Naive thymus-derived CD4-positive, alpha-beta T cell (primary cell): ENCODE measurements at regions of chr7 and their contacts with region 1.

Region 1: GRCh38 chr7:100586266-100587025 is at the start of gene FBXO24:
- DNase-seq: peak; percentile 91 to 100 (median 99)
- ATAC-seq: peak; percentile 91
- H3K4me3 ChIP-seq: peak within 1 kb of the TSS; percentile 94
- H3K4me3 Mint-ChIP-seq: peak within 1 kb of the TSS; percentile 95 to 100 (median 99)
- H3K27ac ChIP-seq: peak within 1 kb of the TSS; percentile 90
- H3K27ac Mint-ChIP-seq: peak within 1 kb of the TSS in 8 of 9 donors; percentile 94 to 99 (median 98)
- H3K4me1 ChIP-seq: peaks cover 22 to 28% of the 10 kb centered on the region in 2 donors
- H3K4me1 Mint-ChIP-seq: peaks cover 20 to 42% (median 30%) of the 10 kb centered on the region in 7 donors
- H3K27me3 ChIP-seq: no peaks in the 10 kb centered on the region
- H3K27me3 Mint-ChIP-seq: peaks cover 0 to 22% (median 4%) of the 10 kb centered on the region in 5 donors
- total RNA-seq, gene FBXO24: 0.75 to 3.1 (median 1.7) TPM

Region 2: DNA sequence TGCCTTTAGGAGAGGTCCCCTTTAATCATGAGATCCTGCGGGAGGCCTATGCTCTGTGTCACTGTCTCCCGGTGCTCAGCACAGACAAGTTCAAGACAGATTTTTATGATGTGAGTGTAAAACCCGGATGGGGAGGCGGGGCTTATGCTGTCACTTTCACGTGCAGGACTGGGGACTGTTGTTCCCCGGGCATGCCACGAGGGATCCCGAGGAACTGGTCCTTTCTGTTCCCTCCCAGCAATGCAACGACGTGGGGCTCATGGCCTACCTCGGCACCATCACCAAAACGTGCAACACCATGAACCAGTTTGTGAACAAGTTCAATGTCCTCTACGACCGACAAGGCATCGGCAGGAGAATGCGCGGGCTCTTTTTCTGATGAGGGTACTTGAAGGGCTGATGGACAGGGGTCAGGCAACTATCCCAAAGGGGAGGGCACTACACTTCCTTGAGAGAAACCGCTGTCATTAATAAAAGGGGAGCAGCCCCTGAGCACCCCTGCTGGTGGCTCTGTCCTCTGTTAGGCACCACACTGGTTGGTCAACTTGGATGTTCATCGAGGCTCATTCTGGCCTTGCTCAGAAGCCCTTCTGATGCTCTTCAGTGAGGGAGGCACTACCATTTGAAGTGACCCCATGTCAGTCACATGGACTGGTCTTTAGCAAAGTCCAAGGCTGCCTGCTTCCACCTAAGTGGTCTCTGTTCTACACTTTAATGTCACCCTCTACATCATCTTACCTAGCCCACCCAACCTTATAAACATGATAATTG is 494.9 kb before region 1 on chr7:
- CTCF ChIA-PET with region 1: no interaction called
- POLR2A ChIA-PET with region 1: no interaction called
- intact Hi-C with region 1: no loop called
- DNase-seq: no peak
- ATAC-seq: no peak
- H3K4me3 ChIP-seq: no peak overlapping the region
- H3K4me3 Mint-ChIP-seq: peak overlapping the region in 5 of 10 donors; percentile 2 to 91 (median 29)
- H3K27ac ChIP-seq: no peak overlapping the region
- H3K27ac Mint-ChIP-seq: peak overlapping the region in 4 of 9 donors; percentile 28 to 49 (median 44)
- H3K4me1 ChIP-seq: peaks cover 6 to 11% of the 10 kb centered on the region in 2 donors
- H3K4me1 Mint-ChIP-seq: peaks cover 11 to 42% (median 23%) of the 10 kb centered on the region in 7 donors
- H3K27me3 ChIP-seq: no peaks in the 10 kb centered on the region
- H3K27me3 Mint-ChIP-seq: no peaks in the 10 kb centered on the region

Region 3: GRCh38 chr7:100469227-100470044 is 117.0 kb before region 1 on chr7:
- CTCF ChIA-PET with region 1: interaction called, 6 read pairs
- POLR2A ChIA-PET with region 1: interaction called, 4 read pairs
- intact Hi-C with region 1: loop called in 1 of 2 experiments (anchors 1 kb)
- DNase-seq: peak; percentile 55 to 87 (median 75)
- ATAC-seq: peak; percentile 94
- H3K4me3 ChIP-seq: no peak overlapping the region
- H3K4me3 Mint-ChIP-seq: peak overlapping the region in 1 of 10 donors; percentile 41
- H3K27ac ChIP-seq: peak overlapping the region; percentile 3
- H3K27ac Mint-ChIP-seq: peak overlapping the region in 6 of 9 donors; percentile 22 to 85 (median 65)
- H3K4me1 ChIP-seq: peaks cover 16 to 23% of the 10 kb centered on the region in 2 donors
- H3K4me1 Mint-ChIP-seq: peaks cover 26 to 45% (median 29%) of the 10 kb centered on the region in 7 donors
- H3K27me3 ChIP-seq: no peaks in the 10 kb centered on the region
- H3K27me3 Mint-ChIP-seq: no peaks in the 10 kb centered on the region

Region 4: DNA sequence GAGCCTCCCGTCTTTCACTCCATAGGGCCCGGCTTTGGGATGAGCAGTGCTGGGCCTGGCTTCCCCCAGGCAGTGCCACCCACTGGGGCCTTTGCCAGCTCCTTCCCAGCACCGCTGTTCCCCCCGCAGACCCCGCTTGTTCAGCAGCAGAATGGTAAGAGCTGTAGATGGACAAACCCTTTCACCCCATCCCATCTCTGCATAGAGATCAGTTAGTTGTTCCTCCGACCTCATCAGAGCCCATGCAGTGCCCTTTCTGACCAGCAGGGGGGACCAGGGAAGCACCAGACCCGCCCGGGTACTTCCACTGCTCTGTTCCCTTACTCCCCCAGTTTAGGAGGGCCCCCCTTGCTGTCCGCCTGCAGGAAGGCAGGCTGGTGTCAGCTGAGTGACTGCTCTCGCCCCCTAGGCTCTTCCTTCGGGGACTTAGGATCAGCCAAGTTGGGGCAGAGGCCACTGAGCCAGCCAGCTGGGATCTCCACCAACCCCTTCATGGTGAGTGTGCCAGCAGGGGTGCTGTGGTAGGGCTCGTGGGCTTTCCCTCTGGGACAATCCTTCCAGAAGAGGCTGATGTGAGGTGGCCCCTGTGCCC is 22.5 kb before region 1 on chr7:
- CTCF ChIA-PET with region 1: interaction called, 65 read pairs
- POLR2A ChIA-PET with region 1: interaction called, 173 read pairs
- intact Hi-C with region 1: loop called (anchors 1 kb)
- DNase-seq: peak; percentile 65 to 89 (median 77)
- ATAC-seq: peak; percentile 82
- H3K4me3 ChIP-seq: no peak overlapping the region
- H3K4me3 Mint-ChIP-seq: no peak overlapping the region
- H3K27ac ChIP-seq: no peak overlapping the region
- H3K27ac Mint-ChIP-seq: peak overlapping the region in 6 of 9 donors; percentile 9 to 76 (median 48)
- H3K4me1 ChIP-seq: peaks cover 8 to 22% of the 10 kb centered on the region in 2 donors
- H3K4me1 Mint-ChIP-seq: peaks cover 13 to 37% (median 28%) of the 10 kb centered on the region in 7 donors
- H3K27me3 ChIP-seq: no peaks in the 10 kb centered on the region
- H3K27me3 Mint-ChIP-seq: no peaks in the 10 kb centered on the region

Region 5: GRCh38 chr7:100604028-100604975 is 17.9 kb after region 1 on chr7:
- CTCF ChIA-PET with region 1: interaction called, 3 read pairs
- POLR2A ChIA-PET with region 1: interaction called, 50 read pairs
- intact Hi-C with region 1: loop called (anchors 1 kb)
- DNase-seq: peak in 8 of 9 donors; percentile 47 to 81 (median 59)
- ATAC-seq: peak; percentile 81
- H3K4me3 ChIP-seq: peak overlapping the region; percentile 70
- H3K4me3 Mint-ChIP-seq: peak overlapping the region; percentile 79 to 94 (median 87)
- H3K27ac ChIP-seq: peak overlapping the region; percentile 67
- H3K27ac Mint-ChIP-seq: peak overlapping the region; percentile 21 to 92 (median 84)
- H3K4me1 ChIP-seq: peaks cover 6 to 10% of the 10 kb centered on the region in 2 donors
- H3K4me1 Mint-ChIP-seq: peaks cover 7 to 35% (median 16%) of the 10 kb centered on the region in 7 donors
- H3K27me3 ChIP-seq: no peaks in the 10 kb centered on the region
- H3K27me3 Mint-ChIP-seq: peaks cover 0 to 15% (median 0%) of the 10 kb centered on the region in 5 donors

Region 6: GRCh38 chr7:100642534-100642907 is 56.1 kb after region 1 on chr7:
- CTCF ChIA-PET with region 1: no interaction called
- POLR2A ChIA-PET with region 1: no interaction called
- intact Hi-C with region 1: no loop called
- DNase-seq: no peak
- ATAC-seq: peak; percentile 56
- H3K4me3 ChIP-seq: no peak overlapping the region
- H3K4me3 Mint-ChIP-seq: no peak overlapping the region
- H3K27ac ChIP-seq: no peak overlapping the region
- H3K27ac Mint-ChIP-seq: no peak overlapping the region
- H3K4me1 ChIP-seq: no peaks in the 10 kb centered on the region
- H3K4me1 Mint-ChIP-seq: peaks cover 0 to 2% (median 0%) of the 10 kb centered on the region in 7 donors
- H3K27me3 ChIP-seq: no peaks in the 10 kb centered on the region
- H3K27me3 Mint-ChIP-seq: peaks cover 0 to 9% (median 4%) of the 10 kb centered on the region in 5 donors

Region 7: GRCh38 chr7:100673300-100673941 is 87.0 kb after region 1 on chr7 and contains the start of gene GNB2:
- CTCF ChIA-PET with region 1: interaction called, 3 read pairs
- POLR2A ChIA-PET with region 1: interaction called, 37 read pairs
- intact Hi-C with region 1: loop called (anchors 1 kb)
- DNase-seq: peak; percentile 92 to 100 (median 96)
- ATAC-seq: peak; percentile 75
- H3K4me3 ChIP-seq: peak within 1 kb of the TSS; percentile 82
- H3K4me3 Mint-ChIP-seq: peak within 1 kb of the TSS; percentile 89 to 99 (median 96)
- H3K27ac ChIP-seq: peak within 1 kb of the TSS; percentile 98
- H3K27ac Mint-ChIP-seq: peak within 1 kb of the TSS; percentile 88 to 97 (median 95)
- H3K4me1 ChIP-seq: no peaks in the 10 kb centered on the region
- H3K4me1 Mint-ChIP-seq: peaks cover 9 to 25% (median 15%) of the 10 kb centered on the region in 7 donors
- H3K27me3 ChIP-seq: no peaks in the 10 kb centered on the region
- H3K27me3 Mint-ChIP-seq: peaks cover 0 to 17% (median 0%) of the 10 kb centered on the region in 5 donors
- total RNA-seq, gene GNB2: 98.2 to 215 (median 132) TPM

Region 8: GRCh38 chr7:100852048-100852872 is 265.8 kb after region 1 on chr7 and contains the start of gene SLC12A9:
- CTCF ChIA-PET with region 1: no interaction called
- POLR2A ChIA-PET with region 1: interaction called, 3 read pairs
- intact Hi-C with region 1: loop called in 1 of 2 experiments (anchors 2 kb)
- DNase-seq: peak; percentile 71 to 90 (median 85)
- ATAC-seq: peak; percentile 96
- H3K4me3 ChIP-seq: peak within 1 kb of the TSS; percentile 73
- H3K4me3 Mint-ChIP-seq: peak within 1 kb of the TSS; percentile 89 to 95 (median 92)
- H3K27ac ChIP-seq: peak within 1 kb of the TSS; percentile 76
- H3K27ac Mint-ChIP-seq: peak within 1 kb of the TSS; percentile 71 to 97 (median 90)
- H3K4me1 ChIP-seq: peaks cover 8 to 16% of the 10 kb centered on the region in 2 donors
- H3K4me1 Mint-ChIP-seq: peaks cover 0 to 31% (median 19%) of the 10 kb centered on the region in 7 donors
- H3K27me3 ChIP-seq: no peaks in the 10 kb centered on the region
- H3K27me3 Mint-ChIP-seq: no peaks in the 10 kb centered on the region
- total RNA-seq, gene SLC12A9: 50.4 to 78.6 (median 62.7) TPM